AG04450 (cell line): ENCODE measurements at regions of chr1 and their contacts with region 1.

Region 1: DNA sequence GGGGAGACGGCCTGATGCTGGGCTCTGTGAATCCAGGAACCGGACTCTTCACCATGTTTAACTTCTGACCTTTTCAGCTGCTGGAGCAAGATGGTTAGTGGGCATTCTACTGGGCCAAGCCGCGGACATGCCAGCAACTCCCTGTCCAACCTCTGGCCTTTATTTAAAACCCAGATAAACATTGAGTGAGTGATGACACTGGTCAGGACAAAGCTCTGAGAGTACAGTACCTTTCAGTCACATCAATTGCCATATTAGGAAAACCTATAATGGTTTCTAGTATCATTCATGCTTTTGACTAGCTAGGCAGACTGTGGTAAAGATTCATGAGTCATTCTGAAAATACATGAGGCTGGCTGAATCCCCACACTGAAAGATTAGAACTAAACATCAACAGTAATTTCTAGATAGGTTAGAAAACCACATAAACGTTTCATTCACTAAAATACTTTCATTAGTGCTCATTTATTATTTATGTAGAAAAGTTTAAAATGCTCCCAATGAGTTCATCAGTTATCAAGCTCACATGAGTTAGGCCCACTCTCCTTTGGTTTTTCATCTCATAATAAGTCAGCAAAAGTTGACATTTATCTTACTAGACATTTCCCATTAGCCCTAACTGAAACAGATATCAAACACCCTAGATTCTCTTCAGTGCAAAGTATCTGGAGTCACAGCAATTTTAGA is 7.1 kb upstream of the ACTA1 start:
- DNase-seq: peak; percentile 66
- H3K4me3 ChIP-seq: no peak overlapping the region
- H3K27ac ChIP-seq: peak overlapping the region; percentile 57
- H3K27me3 ChIP-seq: peaks cover 2% of the 10 kb centered on the region
- CTCF ChIP-seq: no peak

Region 2: GRCh38 chr1:229459815-229460214 is 18.8 kb after region 1 on chr1:
- CTCF ChIA-PET with region 1: no interaction called
- POLR2A ChIA-PET with region 1: no interaction called
- DNase-seq: no peak
- H3K4me3 ChIP-seq: no peak overlapping the region
- H3K27ac ChIP-seq: no peak overlapping the region
- H3K27me3 ChIP-seq: no peaks in the 10 kb centered on the region
- CTCF ChIP-seq: no peak

Region 3: GRCh38 chr1:229537894-229538293 is 96.9 kb after region 1 on chr1:
- CTCF ChIA-PET with region 1: no interaction called
- POLR2A ChIA-PET with region 1: no interaction called
- DNase-seq: no peak
- H3K4me3 ChIP-seq: no peak overlapping the region
- H3K27ac ChIP-seq: no peak overlapping the region
- H3K27me3 ChIP-seq: no peaks in the 10 kb centered on the region
- CTCF ChIP-seq: no peak

Region 4: GRCh38 chr1:229625915-229626831 is 185.2 kb after region 1 on chr1 and contains the starts of genes TAF5L and URB2:
- CTCF ChIA-PET with region 1: no interaction called
- POLR2A ChIA-PET with region 1: no interaction called
- DNase-seq: peak; percentile 65
- H3K4me3 ChIP-seq: peak within 1 kb of the TSS; percentile 93
- H3K27ac ChIP-seq: peak within 1 kb of the TSS; percentile 66
- H3K27me3 ChIP-seq: no peaks in the 10 kb centered on the region
- CTCF ChIP-seq: no peak
- polyA plus RNA-seq, gene TAF5L: 17.3 and 17.9 TPM in 2 replicates
- polyA plus RNA-seq, gene URB2: 6.2 and 6.4 TPM in 2 replicates

Region 5: GRCh38 chr1:230093691-230094090 is 652.7 kb after region 1 on chr1:
- CTCF ChIA-PET with region 1: no interaction called
- POLR2A ChIA-PET with region 1: interaction called, 12 read pairs
- DNase-seq: no peak
- H3K4me3 ChIP-seq: no peak overlapping the region
- H3K27ac ChIP-seq: no peak overlapping the region
- H3K27me3 ChIP-seq: no peaks in the 10 kb centered on the region
- CTCF ChIP-seq: no peak